ENCODE measurements at regions of chr6 and their contacts with region 1.

Region 1: GRCh38 chr6:145814501-145815308 is at the start of gene FBXO30:
- DNase-seq: peak; percentile 95
- total RNA-seq, gene FBXO30: 15.6 TPM

Region 2: DNA sequence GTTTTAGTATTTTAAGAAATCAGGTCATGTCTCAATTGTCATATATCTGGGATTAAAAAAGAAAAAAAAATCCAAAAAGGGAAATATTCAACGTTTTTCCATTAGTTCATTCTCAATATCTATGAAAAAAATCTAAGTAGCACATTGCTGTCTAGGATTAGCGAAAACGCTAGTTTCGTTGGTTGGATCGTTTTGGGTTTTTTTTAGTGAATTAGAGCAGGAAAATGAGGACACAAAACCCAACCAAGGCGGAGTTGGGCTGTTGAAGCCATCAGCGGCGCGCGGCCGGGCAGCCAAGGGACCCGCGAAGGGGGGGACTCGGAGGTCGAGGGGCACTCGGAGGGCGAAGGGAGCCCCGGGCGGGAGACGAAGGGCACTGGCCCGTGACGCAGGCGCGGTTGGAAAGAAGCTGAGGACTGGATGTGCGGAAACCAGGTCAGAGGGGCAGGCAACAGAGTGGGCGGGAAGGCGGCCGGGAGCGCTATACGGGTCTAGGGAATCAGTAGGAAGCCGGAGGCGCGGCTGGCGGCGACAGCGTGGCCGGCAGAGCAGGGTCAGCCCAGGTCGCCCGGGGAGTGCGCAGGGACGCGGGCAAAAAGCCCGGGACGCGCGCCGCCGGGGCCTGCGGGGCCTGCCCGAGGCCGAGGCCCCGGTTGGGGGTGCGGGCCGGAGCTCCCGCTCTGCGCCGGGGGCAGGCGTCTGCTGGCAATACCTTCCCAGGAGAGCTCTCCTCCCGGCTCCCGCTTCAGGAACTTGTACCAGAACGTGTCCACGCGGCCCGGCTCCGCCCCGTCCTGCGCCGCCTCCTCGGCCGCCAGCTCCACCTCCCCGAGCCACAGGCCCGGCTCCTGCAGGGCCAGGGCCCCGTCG is 80.0 kb before region 1 on chr6:
- intact Hi-C with region 1: loop called (anchors 1 kb)
- DNase-seq: peak; percentile 95

Region 3: DNA sequence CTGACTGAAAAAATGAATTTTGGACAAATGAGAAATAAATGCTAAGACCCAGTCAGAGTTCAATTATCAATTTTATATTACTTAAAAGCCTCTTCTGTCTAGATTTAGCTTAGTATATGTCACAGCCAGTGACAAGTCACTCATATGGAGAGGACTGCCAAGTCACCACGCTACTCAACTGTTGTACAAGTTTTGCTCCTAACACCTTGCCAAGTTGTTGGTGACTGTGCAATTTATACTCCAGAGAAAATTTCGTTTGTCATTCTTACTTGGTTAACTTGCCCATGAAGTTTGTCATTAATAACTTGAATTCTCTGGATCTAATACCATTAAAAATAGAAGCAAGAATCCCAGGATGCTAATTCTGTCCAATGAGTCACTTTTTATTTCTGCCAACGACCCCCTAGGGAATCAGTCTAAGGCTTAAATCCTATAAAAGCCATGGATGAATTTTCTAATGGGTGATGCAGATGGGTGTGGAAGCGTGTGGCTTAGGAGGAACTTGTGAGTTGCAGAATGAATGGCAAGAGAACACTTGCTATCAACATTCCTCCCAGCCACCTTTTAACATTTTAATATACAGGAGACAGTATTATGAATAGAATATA is 30.3 kb after region 1 on chr6:
- intact Hi-C with region 1: loop called (anchors 5 kb)
- DNase-seq: no peak

Region 4: GRCh38 chr6:145963216-145964068 is 148.7 kb after region 1 on chr6:
- intact Hi-C with region 1: loop called (anchors 2 kb)
- DNase-seq: peak; percentile 81

Measured in cardiac septum (tissue), 1 donor.